GM23248 (cell line): ENCODE measurements at regions of chr3 and their contacts with region 1.

Region 1: GRCh38 chr3:108477511-108478147 is 32.8 kb downstream of the MYH15 start:
- DNase-seq: peak; percentile 81
- H3K4me3 ChIP-seq: no peak overlapping the region
- H3K27ac ChIP-seq: no peak overlapping the region
- H3K4me1 ChIP-seq: peaks cover 2% of the 10 kb centered on the region
- H3K27me3 ChIP-seq: no peaks in the 10 kb centered on the region

Region 2: GRCh38 chr3:107543666-107544065 is 934.0 kb before region 1 on chr3:
- in situ Hi-C with region 1: no loop called
- DNase-seq: peak; percentile 31
- H3K4me3 ChIP-seq: no peak overlapping the region
- H3K27ac ChIP-seq: no peak overlapping the region
- H3K4me1 ChIP-seq: 0 out of 2 replicates have a peak, but pooled peaks cover 5% of the 10 kb centered on the region
- H3K27me3 ChIP-seq: no peaks in the 10 kb centered on the region

Region 3: DNA sequence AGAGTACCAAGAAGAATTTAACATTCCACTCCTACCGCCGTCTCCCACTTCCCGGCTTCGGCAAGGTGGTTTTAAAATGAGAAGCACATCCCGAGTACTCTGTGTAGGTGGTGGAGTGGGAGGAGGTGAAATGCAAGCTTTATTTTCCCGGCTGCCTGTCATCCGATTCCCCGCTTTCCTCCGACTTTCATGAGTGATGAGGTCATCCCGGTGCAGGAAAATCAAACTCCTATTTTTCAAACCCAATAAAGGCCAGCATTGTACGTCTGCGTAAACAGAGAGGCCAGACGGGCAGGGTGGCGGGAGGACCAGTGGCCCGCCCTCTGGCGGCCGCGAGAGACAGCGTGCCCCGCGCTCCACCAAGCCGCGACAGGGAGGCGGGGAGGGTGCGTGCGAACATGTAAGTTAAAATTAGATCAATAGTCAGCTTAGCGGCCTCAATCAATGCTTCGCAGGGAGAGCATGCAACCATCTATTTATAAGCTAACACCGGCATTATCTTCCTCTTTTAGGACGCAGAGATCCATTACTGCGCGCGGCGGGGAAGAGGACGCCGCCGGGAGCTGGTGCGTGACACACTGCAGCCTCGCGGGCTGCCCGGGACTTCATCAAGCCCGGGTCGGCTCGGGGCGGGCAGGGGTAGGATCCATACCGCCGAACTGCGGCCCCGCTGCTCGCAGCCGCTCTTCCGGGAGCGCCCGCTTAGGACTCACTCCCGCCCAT is 550.1 kb before region 1 on chr3:
- in situ Hi-C with region 1: loop called (anchors 10 kb)
- DNase-seq: peak; percentile 88
- H3K4me3 ChIP-seq: peak overlapping the region; percentile 74
- H3K27ac ChIP-seq: no peak overlapping the region
- H3K4me1 ChIP-seq: 0 out of 2 replicates have a peak, but pooled peaks cover 3% of the 10 kb centered on the region
- H3K27me3 ChIP-seq: no peaks in the 10 kb centered on the region

Region 4: DNA sequence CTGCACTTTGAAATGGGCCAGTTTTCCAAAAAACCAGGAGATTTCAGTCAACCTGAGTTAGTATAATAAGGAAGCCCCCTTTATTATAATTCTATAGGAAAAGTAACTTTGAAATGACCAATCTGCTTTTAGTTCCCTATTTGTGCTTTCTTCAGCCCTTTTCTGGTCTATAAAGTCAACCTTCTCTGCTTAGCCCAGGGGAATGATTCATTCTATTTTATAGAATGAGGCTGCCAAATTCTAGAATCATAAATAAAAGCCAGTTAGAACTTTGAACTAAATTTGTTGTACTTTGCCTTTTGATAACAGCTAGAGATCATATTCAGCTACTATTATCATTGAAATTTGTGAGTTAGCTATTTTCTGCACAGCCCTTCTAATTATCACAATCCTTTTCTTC is 86.9 kb after region 1 on chr3:
- in situ Hi-C with region 1: no loop called
- DNase-seq: peak; percentile 9
- H3K4me3 ChIP-seq: no peak overlapping the region
- H3K27ac ChIP-seq: no peak overlapping the region
- H3K4me1 ChIP-seq: no peaks in the 10 kb centered on the region
- H3K27me3 ChIP-seq: no peaks in the 10 kb centered on the region

Region 5: DNA sequence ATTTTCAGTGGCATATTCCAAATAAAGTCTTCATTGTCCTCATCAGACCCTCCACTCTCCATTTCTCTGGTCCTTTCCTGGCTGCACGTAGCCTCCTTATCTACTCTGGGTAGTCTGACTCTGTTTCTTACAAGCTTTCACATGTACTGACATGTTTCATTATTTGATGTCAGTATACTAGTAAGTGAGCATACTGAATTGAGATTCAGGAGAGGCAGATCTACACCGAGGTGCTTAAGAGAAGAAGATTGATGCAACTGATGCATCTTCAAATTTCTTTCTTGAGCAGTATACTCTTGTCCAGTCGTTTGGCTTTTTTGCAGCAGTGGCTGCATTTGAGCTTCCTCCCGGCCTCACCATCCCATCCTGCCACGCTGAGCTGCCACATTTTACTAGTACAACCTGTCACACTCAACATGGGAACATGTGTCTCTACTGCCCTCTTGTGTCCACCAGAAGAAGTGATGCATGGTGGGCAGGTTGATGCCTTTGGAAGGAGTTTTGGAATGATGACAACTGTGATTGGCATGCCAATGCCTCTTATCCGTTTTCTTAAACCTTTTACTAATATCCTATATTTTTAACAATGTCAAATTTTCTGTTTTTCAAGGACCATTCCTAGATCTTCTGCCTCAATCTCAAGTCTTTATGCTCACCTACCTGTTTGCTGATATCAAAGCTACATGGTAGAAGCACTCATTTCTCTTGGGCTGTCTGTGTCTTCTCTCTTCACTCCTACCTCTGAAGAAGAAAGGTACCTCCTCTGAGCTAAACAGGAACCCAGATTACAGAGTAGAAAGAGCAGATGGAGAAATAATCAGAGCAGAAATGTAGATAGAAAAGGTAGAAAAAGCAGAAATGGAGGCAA is 437.4 kb after region 1 on chr3:
- in situ Hi-C with region 1: loop called (anchors 25 kb)
- DNase-seq: peak; percentile 62
- H3K4me3 ChIP-seq: no peak overlapping the region
- H3K27ac ChIP-seq: no peak overlapping the region
- H3K4me1 ChIP-seq: no peaks in the 10 kb centered on the region
- H3K27me3 ChIP-seq: 0 out of 2 replicates have a peak, but pooled peaks cover 3% of the 10 kb centered on the region